ENCODE measurements at regions of chr3 and their contacts with region 1.

Region 1: DNA sequence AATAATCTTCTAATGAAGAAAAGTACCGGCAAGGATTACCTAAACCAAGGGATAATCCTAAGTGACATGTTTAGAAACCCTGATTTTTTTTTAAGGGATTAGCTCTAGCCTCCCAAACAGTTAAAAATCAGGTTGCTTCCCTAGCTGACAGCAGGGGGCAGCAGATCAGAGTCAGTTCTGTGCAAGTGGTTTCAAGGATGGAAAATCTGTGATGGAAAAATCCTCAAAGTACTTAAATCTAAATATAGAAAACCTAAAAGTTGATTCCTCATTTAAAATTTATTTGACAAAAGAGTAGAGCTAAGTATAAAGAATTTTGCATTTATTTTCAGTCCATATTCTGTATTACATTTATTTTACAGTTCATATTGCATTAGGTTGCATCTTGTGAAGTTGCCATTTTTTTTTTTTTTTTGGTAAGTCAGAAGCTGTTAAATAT is 107.6 kb downstream of the PEX5L start:
- H3K4me3 ChIP-seq: no peak overlapping the region
- H3K27ac ChIP-seq: no peak overlapping the region
- H3K4me1 ChIP-seq: no peaks in the 10 kb centered on the region
- CTCF ChIP-seq: no peak

Region 2: DNA sequence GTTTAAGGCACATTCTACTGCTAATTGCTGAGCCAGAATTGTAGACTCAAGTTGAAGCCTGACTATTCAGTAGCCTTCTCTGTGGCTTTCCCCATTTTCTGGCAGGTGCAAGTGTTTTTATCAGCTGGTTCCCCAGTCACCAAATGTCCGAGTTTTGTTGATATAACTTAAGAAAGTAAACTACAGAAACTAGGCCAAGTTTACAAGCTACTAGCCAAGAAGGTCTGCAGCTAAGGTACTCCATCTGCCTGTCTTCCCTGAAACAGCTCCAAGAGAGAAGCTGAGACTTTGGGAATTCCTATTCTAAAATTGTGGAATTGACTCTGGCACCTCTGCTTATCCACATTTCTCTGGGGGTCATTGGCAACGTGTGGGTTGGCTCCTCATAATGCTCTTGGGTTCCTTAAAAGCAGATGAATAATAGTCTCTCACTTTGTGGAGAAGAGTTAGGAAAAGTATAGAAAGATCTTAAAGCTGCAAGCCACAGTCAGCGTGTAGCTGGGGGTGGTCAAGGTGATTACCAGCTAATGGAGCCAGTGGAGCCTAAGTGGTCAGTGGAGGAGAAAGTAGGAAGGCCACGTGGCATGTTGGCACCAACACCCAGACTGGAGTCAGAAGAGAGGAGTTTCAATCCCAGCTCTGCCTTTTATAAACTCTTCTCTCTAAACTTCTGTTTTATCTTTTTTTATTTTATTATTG is 21.2 kb before region 1 on chr3:
- CTCF ChIA-PET with region 1: interaction called, 18 read pairs
- POLR2A ChIA-PET with region 1: no interaction called
- H3K4me3 ChIP-seq: no peak overlapping the region
- H3K27ac ChIP-seq: no peak overlapping the region
- H3K4me1 ChIP-seq: no peaks in the 10 kb centered on the region
- CTCF ChIP-seq: no peak

Region 3: DNA sequence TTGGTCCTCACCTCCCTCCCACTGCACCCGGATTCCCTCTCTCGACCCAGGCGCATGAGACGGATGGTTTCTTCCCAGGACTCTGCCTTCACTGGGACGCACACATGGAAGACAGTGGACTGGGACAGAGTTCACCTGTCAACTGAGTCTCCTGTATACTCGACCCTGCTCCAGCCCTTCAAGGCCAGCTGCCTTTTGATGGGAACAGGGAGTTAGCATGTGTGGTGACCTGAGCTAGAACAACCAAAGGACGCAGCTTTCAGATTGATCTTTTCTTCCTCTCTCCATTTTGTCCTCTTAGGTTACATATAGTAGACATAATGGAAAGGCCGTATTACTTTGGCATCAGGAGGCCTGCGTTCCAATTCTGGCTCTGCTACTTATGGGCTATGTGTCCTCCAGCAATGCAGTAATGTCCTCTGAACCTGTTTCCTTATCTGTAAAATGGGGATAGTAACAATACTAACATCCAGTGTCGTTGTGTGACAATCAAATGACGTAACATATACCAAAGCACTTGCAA is 13.5 kb after region 1 on chr3:
- CTCF ChIA-PET with region 1: interaction called, 15 read pairs
- POLR2A ChIA-PET with region 1: no interaction called
- H3K4me3 ChIP-seq: peak overlapping the region; percentile 38
- H3K27ac ChIP-seq: no peak overlapping the region
- H3K4me1 ChIP-seq: no peaks in the 10 kb centered on the region
- CTCF ChIP-seq: no peak